CD4-positive, alpha-beta memory T cell (primary cell): ENCODE measurements at regions of chrX and their contacts with region 1.

Region 1: DNA sequence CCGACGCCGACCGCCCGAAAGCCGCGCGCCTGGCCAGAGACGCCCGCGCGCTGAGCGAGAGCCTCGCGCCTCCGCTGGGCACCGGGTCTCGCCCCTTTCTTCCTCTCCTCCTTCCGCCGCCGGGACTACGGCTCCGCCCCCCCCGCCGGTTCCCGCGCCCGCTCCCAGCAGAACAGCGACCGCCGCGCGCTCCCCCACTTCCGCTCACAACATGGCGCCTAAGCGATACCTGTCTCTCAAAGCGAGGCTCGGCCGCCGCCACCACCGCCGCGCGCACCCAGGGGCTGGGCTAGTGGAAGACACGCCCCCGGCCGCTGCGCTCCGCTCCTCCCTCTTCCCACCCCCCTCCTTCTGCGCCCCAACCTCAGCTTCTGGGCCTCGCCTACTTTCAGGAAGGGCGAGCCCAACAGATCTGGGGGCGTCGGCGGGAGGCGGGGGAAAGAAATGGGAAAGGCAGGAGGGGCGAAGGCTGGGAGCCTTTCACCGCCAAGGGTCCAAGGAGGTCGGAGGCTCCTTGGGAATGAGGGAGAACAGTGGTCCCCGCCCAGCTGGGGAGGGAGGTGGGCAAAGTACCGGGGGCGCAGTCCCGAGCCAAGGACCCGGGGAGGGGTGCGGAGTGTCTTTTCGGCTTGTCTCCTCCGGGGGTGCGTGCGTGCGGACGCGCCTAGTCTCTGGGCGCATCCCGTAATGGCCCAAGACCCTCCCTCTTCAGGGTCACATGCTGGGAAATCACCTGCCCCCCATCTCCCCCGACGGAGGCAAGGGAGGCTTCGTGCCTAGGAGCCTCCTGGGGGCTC is at the start of gene RPS6KA3:
- DNase-seq: peak; percentile 87 to 92 (median 89)
- H3K4me3 ChIP-seq: peak within 1 kb of the TSS; percentile 69 to 86
- H3K4me3 Mint-ChIP-seq: peak within 1 kb of the TSS; percentile 88 to 98 (median 97)
- H3K27ac ChIP-seq: peak within 1 kb of the TSS; percentile 87
- H3K27ac Mint-ChIP-seq: peak within 1 kb of the TSS; percentile 94 to 97 (median 97)
- H3K4me1 ChIP-seq: peaks cover 21% of the 10 kb centered on the region
- H3K4me1 Mint-ChIP-seq: peaks cover 7 to 17% (median 11%) of the 10 kb centered on the region in 4 donors
- H3K27me3 ChIP-seq: no peaks in the 10 kb centered on the region
- H3K27me3 Mint-ChIP-seq: no peaks in the 10 kb centered on the region
- total RNA-seq, gene RPS6KA3: 130 to 139 TPM

Region 2: GRCh38 chrX:19827088-19827487 is 439.9 kb before region 1 on chrX:
- CTCF ChIA-PET with region 1: no interaction called
- POLR2A ChIA-PET with region 1: no interaction called
- intact Hi-C with region 1: no loop called
- DNase-seq: no peak
- H3K4me3 ChIP-seq: no peak overlapping the region
- H3K4me3 Mint-ChIP-seq: peak overlapping the region in 7 of 8 donors; percentile 14 to 72 (median 59)
- H3K27ac ChIP-seq: peak overlapping the region; percentile 13
- H3K27ac Mint-ChIP-seq: peak overlapping the region; percentile 56 to 93 (median 88)
- H3K4me1 ChIP-seq: peaks cover 38% of the 10 kb centered on the region
- H3K4me1 Mint-ChIP-seq: peaks cover 14 to 46% (median 24%) of the 10 kb centered on the region in 4 donors
- H3K27me3 ChIP-seq: no peaks in the 10 kb centered on the region
- H3K27me3 Mint-ChIP-seq: no peaks in the 10 kb centered on the region

Region 3: GRCh38 chrX:20141281-20142220 is 125.5 kb before region 1 on chrX and contains the start of gene EIF1AX:
- CTCF ChIA-PET with region 1: no interaction called
- POLR2A ChIA-PET with region 1: interaction called, 3 read pairs
- intact Hi-C with region 1: loop called (anchors 5 kb)
- DNase-seq: peak; percentile 98 to 100 (median 99)
- H3K4me3 ChIP-seq: peak within 1 kb of the TSS; percentile 80 to 81
- H3K4me3 Mint-ChIP-seq: peak within 1 kb of the TSS; percentile 85 to 95 (median 92)
- H3K27ac ChIP-seq: peak within 1 kb of the TSS; percentile 84
- H3K27ac Mint-ChIP-seq: peak within 1 kb of the TSS; percentile 84 to 96 (median 94)
- H3K4me1 ChIP-seq: peaks cover 22% of the 10 kb centered on the region
- H3K4me1 Mint-ChIP-seq: peaks cover 12 to 33% (median 28%) of the 10 kb centered on the region in 4 donors
- H3K27me3 ChIP-seq: no peaks in the 10 kb centered on the region
- H3K27me3 Mint-ChIP-seq: no peaks in the 10 kb centered on the region
- total RNA-seq, gene EIF1AX: 61.1 to 62.4 TPM

Region 4: GRCh38 chrX:20285513-20285912 is 18.5 kb after region 1 on chrX:
- CTCF ChIA-PET with region 1: no interaction called
- POLR2A ChIA-PET with region 1: no interaction called
- intact Hi-C with region 1: no loop called
- DNase-seq: no peak
- H3K4me3 ChIP-seq: no peak overlapping the region
- H3K4me3 Mint-ChIP-seq: no peak overlapping the region
- H3K27ac ChIP-seq: no peak overlapping the region
- H3K27ac Mint-ChIP-seq: no peak overlapping the region
- H3K4me1 ChIP-seq: no peaks in the 10 kb centered on the region
- H3K4me1 Mint-ChIP-seq: peaks cover 0 to 2% (median 0%) of the 10 kb centered on the region in 4 donors
- H3K27me3 ChIP-seq: no peaks in the 10 kb centered on the region
- H3K27me3 Mint-ChIP-seq: no peaks in the 10 kb centered on the region

Region 5: DNA sequence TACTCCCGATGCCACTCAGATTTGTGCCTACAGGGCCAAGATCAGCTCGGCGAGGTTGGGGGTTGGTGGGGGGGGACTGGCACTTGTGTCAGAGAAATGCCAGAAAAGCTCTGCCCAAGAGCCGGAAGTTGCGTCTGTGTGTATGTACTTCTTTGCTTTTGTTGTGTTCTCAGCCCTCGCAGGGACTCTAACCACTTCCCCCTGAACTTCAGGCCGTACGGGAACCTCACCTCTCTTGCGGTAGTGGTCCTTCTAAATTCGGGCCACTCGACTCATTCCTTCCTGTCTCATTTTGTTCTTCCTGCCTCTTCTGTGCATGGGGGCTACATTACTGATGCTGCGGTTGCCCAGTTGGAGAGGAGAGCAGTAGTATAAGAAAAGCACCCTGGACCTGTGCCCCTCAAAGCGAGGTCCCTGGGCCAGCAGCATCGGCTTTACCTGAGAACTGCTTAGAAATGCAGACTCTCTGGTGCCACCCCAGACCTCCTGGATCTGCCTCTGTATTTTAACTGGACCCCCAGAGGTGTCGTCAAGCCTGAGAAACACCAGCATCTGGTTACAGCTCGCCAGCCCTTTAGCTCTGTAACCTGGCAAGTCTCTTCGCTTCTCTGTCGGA is 146.0 kb after region 1 on chrX:
- CTCF ChIA-PET with region 1: no interaction called
- POLR2A ChIA-PET with region 1: interaction called, 21 read pairs
- intact Hi-C with region 1: no loop called
- DNase-seq: peak; percentile 68 to 77 (median 72)
- H3K4me3 ChIP-seq: peak overlapping the region in 1 of 2 donors; percentile 24
- H3K4me3 Mint-ChIP-seq: peak overlapping the region; percentile 64 to 86 (median 74)
- H3K27ac ChIP-seq: peak overlapping the region; percentile 51
- H3K27ac Mint-ChIP-seq: peak overlapping the region; percentile 84 to 96 (median 93)
- H3K4me1 ChIP-seq: peaks cover 36% of the 10 kb centered on the region
- H3K4me1 Mint-ChIP-seq: peaks cover 20 to 44% (median 28%) of the 10 kb centered on the region in 4 donors
- H3K27me3 ChIP-seq: no peaks in the 10 kb centered on the region
- H3K27me3 Mint-ChIP-seq: no peaks in the 10 kb centered on the region

Region 6: DNA sequence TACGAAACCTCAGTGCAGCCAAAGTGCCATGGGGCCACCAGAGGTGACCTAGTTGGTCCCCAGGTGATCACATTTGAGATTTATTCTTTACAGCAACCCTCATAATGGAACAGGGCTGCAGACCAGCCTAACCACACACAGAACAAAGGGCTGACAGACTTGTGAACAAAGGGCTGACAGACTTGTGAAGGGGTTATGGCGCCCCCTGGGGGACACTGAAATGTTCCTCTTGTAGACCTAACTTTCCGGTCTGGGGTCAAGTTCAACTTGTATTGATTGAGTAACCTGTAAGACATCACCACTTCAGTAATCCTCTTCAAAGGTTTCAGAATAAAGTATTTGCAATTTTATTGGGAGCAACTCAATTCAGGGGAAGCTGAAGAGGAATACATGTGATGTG is 175.6 kb after region 1 on chrX:
- CTCF ChIA-PET with region 1: interaction called, 3 read pairs
- POLR2A ChIA-PET with region 1: interaction called, 47 read pairs
- intact Hi-C with region 1: no loop called
- DNase-seq: peak; percentile 78 to 81 (median 79)
- H3K4me3 ChIP-seq: no peak overlapping the region
- H3K4me3 Mint-ChIP-seq: peak overlapping the region in 3 of 8 donors; percentile 24 to 62 (median 25)
- H3K27ac ChIP-seq: no peak overlapping the region
- H3K27ac Mint-ChIP-seq: peak overlapping the region in 6 of 7 donors; percentile 15 to 78 (median 56)
- H3K4me1 ChIP-seq: peaks cover 71% of the 10 kb centered on the region
- H3K4me1 Mint-ChIP-seq: peaks cover 31 to 65% (median 50%) of the 10 kb centered on the region in 4 donors
- H3K27me3 ChIP-seq: no peaks in the 10 kb centered on the region
- H3K27me3 Mint-ChIP-seq: peaks cover 0 to 1% of the 10 kb centered on the region in 2 donors